ENCODE measurements at regions of chr6 and their contacts with region 1.

Region 1: GRCh38 chr6:56914798-56915658 is 39.9 kb upstream of the BEND6 start:
- DNase-seq: peak in 2 of 3 donors; percentile 52 to 58
- ATAC-seq: peak; percentile 70 to 82
- H3K4me3 ChIP-seq: no peak overlapping the region
- H3K27ac ChIP-seq: no peak overlapping the region
- H3K4me1 ChIP-seq: no peaks in the 10 kb centered on the region
- H3K27me3 ChIP-seq: no peaks in the 10 kb centered on the region

Region 2: DNA sequence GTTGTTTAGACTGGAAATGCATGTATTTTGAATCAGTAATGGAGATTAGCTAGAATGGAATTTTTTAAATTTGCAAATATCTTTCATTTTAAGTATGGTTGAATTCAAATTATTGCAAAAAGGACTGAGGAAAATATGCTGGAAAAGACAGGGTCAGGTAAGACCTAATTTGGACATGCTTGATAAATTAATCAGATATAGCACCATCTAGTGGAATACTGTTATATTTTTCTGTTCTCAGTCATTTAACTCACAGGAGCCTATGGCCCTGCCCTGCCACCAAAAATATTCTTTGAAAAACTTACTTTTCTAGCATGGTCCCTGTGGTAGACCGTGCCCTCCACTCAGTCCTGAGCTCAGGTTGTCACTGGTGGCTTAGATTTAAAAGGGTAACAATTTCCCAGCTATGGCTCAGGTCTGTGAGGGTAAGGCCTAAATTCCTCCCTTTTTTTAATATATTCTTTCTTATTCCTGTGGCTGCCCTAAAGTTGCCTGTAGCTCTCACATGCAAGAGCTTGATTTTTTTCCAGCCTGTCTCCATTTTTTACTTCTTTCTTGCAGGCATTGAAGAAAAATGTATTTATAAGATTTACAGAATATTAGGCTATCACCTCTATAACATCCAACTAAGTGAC is 106.2 kb after region 1 on chr6:
- intact Hi-C with region 1: loop called in 1 of 4 experiments (anchors 10 kb)
- DNase-seq: no peak
- ATAC-seq: peak; percentile 40 to 41
- H3K4me3 ChIP-seq: no peak overlapping the region
- H3K27ac ChIP-seq: no peak overlapping the region
- H3K4me1 ChIP-seq: no peaks in the 10 kb centered on the region
- H3K27me3 ChIP-seq: no peaks in the 10 kb centered on the region